ENCODE measurements at regions of chr11 and their contacts with region 1.

Region 1: GRCh38 chr11:96389720-96390487 is at the starts of genes CCDC82 and JRKL:
- DNase-seq: peak; percentile 91 to 99 (median 97)

Region 2: DNA sequence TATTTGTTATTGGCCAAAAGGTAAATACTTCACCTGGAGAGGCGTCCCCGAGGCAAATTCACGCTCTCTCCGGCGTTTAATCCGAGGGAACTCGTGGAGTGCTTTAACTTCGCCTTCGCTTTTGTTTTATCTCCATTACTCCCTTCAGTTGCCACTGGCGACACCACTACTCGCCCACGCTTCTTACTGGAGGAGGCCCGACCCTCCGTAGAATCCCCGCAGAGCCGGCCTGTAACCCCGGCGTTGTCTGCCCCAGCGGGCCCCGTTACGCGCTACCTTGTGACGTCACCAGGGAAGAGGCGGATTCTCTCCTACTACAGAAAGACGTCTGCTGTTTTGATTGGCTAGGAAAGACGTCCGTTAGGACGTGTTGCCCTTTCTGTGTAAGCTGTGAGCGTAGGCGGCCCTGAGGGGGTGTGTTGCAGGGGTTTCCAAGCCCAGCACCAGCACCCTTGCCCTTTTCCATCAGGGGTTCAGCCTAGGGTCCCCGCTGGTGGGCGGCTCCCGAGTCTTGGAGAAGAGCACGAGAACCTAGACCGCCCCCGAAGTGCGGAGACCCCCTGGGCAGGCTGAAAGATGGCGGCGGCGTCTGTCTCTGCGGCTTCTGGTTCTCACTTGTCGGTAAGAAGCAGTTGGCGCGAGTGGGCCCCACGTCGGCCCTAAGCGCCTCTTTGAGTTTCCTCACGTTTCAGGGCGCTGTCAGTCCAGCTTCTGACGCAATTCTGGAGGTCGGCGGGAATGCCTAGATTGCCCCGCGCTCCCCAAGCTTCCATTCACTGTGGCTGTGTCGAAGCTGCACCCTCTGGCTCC is 599.6 kb before region 1 on chr11 and contains the start of gene CEP57:
- intact Hi-C with region 1: loop called (anchors 5 kb)
- DNase-seq: peak; percentile 83 to 98 (median 92)

Region 3: GRCh38 chr11:95835768-95836488 is 554.0 kb before region 1 on chr11:
- intact Hi-C with region 1: loop called (anchors 5 kb)
- DNase-seq: peak in 7 of 10 donors; percentile 41 to 89 (median 55)

Region 4: DNA sequence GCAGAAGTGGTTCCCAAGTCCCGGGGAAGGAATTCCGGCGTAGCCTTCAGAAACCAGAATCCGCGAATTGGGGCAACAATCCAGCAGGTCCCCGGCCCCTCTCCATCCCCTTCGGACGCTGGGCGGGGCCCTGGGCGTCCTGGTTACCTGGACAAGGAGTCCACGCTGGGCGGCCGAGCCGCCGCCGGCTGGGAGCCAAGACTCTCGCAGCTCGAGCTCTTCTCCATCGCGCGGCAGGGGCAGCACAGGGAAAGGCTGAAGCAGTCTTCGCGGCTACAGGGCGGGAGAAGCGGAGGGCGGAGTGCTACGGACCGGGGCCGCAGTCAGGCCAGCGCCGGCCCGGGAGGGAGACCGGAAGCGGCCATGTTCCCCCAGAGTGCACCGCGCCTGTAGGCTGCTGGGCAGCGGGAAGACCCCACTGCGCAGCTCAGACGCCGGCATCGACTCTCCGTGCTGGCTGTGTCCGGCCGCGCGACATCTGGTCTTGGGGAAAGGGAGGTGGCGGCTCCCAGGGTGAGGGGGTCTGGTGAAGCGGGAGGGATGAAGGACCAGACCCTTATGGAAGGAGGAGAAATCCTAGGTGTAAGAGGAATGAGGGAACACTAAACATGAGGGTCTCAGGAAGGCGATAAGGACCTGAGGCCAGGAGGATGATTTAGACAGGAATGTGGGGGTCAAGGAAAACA is 466.0 kb before region 1 on chr11 and contains the start of gene MTMR2:
- intact Hi-C with region 1: loop called (anchors 10 kb)
- DNase-seq: peak; percentile 75 to 97 (median 84)